ENCODE measurements at regions of chr4 and their contacts with region 1.

Region 1: DNA sequence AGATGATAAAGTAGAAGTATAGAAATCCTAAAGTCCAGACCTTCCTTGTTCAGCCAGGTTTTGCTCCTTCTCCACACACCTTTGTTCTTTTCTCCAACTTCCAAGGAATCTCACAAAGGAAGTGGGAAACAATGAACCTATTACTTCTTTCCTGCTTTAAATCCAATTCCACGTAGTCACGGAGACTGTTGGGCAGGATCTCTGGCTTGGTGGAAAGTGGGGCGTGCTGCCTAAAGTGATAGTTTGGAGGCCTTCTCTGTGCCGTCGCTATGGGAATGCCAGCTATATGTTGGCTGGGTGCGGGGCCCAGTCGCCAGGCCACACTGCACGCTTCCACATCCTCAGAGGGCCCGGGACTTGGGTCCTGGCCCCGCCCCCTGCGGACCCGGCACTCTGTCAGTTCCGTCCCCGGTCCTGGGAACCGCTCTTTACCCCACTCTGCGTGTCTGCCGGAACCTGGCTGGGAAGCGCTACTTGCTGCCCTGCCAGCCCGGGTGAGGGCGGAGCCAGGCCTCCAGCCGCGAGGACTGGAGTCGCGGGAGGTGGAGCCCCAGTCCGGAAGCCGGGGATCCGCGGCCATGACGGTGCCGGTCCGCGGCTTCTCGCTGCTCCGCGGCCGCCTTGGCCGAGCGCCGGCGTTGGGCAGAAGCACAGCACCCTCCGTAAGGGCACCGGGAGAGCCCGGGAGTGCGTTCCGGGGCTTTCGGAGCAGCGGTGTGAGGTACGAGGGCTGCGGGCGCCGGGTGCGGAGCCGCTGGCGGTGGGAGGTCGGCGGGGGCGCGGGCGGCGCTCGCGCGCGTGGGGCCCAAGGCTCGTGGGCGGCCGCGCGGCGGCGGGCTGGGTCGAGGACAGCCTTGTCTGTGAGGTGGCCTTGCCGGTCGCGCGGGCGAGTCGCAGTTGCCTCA is at the start of gene MTHFD2L:
- H3K4me3 Mint-ChIP-seq: peak within 1 kb of the TSS; percentile 85
- H3K27ac Mint-ChIP-seq: peak within 1 kb of the TSS; percentile 89
- H3K4me1 Mint-ChIP-seq: peaks cover 19% of the 10 kb centered on the region
- H3K27me3 Mint-ChIP-seq: no peaks in the 10 kb centered on the region

Region 2: GRCh38 chr4:73055241-73055897 is 1102.4 kb before region 1 on chr4:
- intact Hi-C with region 1: loop called (anchors 10 kb)
- H3K4me3 Mint-ChIP-seq: no peak overlapping the region
- H3K27ac Mint-ChIP-seq: no peak overlapping the region
- H3K4me1 Mint-ChIP-seq: no peaks in the 10 kb centered on the region
- H3K27me3 Mint-ChIP-seq: no peaks in the 10 kb centered on the region

Measured in dendritic cell treated with granulocyte-macrophage colony-stimulating factor and Interleukin-4, amounts not matched to agents 40 ng/mL and 50 ng/mL, for 4 days (primary cell).